ENCODE measurements at regions of chr9 and their contacts with region 1.

Region 1: DNA sequence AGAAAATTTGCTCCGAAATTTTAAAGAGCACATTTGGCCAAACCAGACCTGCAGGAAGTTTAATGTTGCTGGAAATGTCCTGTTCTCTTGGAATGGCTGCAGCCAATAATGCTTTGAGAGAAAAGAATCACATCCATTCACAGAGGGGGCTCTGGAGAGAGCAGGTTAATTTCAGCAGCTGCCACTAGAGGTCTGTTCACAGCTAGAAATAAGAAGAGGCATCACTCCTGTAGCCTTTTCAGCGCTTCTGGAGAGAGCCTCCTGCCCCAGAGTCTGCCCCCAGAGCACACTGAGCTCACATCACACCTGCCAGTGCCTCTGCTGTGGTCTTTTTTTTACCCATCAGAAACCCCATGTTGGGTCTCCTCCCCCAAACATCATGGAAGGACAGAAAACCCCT is 124.8 kb upstream of the RAD23B start:
- DNase-seq: no peak
- H3K4me3 ChIP-seq: no peak overlapping the region
- CTCF ChIP-seq: peak; percentile 57

Region 2: DNA sequence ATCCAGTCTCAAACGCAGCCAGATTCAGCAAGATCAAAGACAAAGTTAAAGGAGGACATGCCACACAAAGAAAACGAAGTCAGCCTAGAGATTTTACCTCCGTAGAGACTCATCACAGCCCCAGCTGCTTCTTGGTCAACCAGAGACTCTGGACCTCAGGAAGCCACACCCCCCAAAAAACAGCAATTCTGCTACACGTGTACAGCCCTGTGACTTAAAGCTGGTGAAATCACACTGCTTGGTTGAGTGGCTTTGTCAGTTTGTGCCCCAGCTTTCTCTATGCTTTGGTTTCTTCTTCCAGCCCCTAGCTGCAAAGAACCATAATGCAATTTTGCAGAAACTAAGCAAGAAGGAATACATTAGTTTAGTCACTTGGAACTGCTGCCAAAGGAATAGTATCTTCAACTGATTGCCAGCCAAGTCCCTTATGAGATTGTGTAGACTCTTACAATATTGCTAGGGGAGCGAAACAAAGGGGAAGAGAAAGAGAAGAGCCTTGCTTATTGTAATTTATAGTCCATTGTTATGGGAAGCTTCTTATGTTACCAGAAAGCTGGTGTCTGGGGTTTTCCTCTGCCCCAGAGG is 454.2 kb before region 1 on chr9:
- CTCF ChIA-PET with region 1: no interaction called
- POLR2A ChIA-PET with region 1: no interaction called
- DNase-seq: no peak
- H3K4me3 ChIP-seq: no peak overlapping the region
- CTCF ChIP-seq: no peak

Region 3: GRCh38 chr9:107112707-107113243 is 45.5 kb before region 1 on chr9:
- CTCF ChIA-PET with region 1: no interaction called
- POLR2A ChIA-PET with region 1: no interaction called
- DNase-seq: no peak
- H3K4me3 ChIP-seq: no peak overlapping the region
- CTCF ChIP-seq: no peak

Region 4: DNA sequence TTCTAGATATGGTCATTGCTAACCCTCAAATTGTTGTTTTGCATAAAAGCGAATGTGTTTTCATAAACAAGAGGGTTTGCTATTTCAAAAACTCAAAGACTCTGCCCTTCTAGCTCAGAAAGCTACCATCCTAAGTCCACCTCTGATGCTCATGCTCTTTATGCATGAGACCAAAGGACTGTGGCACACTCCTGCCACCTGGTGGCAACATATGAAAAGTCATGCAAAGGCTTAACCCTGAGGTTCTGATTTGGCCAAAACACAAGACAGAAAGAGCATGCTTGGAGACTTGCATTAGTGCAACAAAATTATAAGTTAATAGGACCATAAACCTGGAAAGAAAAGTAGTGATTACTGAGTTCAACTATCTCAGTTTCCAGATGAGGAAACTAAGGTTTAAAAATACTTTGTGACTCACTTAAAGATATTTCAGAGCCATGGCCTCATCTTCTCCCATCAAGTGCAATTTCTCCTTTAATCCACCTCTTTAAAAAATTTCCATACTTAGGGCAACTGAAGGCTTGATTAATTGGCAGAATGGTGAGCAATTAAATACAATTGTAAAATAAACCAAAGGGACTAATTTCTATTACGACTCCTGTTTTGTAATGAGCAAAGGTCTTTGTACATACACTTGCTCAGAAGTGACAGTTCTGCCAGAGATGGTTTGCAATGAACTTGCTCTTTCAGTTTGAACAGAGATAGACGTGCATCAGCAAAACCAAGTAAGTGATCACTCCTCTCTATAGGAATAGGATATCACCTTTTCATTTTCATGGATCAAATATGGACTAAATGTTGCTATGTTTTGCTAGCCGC is 14.0 kb after region 1 on chr9:
- CTCF ChIA-PET with region 1: interaction called, 15 read pairs
- POLR2A ChIA-PET with region 1: no interaction called
- DNase-seq: peak; percentile 17
- H3K4me3 ChIP-seq: no peak overlapping the region
- CTCF ChIP-seq: peak; percentile 76

Region 5: GRCh38 chr9:108456903-108457302 is 1298.6 kb after region 1 on chr9:
- CTCF ChIA-PET with region 1: no interaction called
- POLR2A ChIA-PET with region 1: no interaction called
- DNase-seq: no peak
- H3K4me3 ChIP-seq: no peak overlapping the region
- CTCF ChIP-seq: no peak

Measured in AG04449 (cell line).